K562 (cell line): ENCODE measurements at regions of chr3 and their contacts with region 1.

Region 1: DNA sequence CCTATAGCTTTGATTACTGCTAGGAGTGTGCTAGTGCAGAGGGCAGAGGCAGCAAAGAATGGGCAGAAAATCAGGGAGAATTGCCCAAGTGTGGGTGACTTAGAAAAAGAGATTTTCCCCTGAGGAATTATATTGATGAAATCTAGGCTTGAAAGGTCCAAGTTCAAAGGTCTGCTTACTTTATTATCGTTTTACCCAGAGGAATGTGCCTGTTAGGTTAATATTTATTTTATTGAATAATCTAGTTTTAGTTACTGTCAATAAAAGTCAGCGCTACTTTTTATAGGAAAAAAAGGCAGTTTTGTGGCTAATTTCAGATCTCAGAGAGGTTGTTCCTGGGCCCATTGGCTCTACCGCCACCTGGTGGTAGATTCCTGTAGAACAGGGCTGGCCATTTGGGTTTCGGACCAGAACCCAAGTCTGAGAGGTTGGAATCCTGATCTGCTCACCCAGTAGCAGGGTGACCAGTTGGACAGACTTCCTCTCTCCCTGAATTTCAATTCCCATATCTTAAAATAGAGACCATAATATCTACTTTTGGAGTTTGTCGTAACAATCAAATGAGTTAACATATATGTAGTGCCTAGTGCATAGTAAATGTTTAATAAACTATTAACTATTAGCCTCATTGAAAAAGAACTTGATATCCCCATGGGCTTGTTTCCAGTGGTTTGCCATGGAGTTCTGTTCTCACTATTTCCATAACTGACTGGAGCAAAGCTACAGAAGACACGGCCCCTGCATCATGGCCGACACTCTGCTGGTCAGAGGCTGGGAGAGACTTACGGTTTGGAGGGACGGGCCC is 62.7 kb upstream of the ZNF148 start:
- DNase-seq: peak; percentile 42 to 71 (median 53)
- ATAC-seq: 0 out of 3 replicates have a peak, but pooled peaks have one; percentile 11
- H3K4me3 ChIP-seq: no peak overlapping the region
- H3K27ac ChIP-seq: no peak overlapping the region
- H3K4me1 ChIP-seq: peaks cover 37 to 42% of the 10 kb centered on the region in 2 experiments; a peak in 4 of 5 replicates
- H3K27me3 ChIP-seq: no peaks in the 10 kb centered on the region
- CTCF ChIP-seq: peak; percentile 73 to 86 (median 73)
- EP300 ChIP-seq: no peak
- POLR2A ChIP-seq: no peak
- RAD21 ChIP-seq: peak; percentile 63 to 78

Region 2: GRCh38 chr3:124995460-124995994 is 442.3 kb before region 1 on chr3:
- CTCF ChIA-PET with region 1: no interaction called
- POLR2A ChIA-PET with region 1: no interaction called
- in situ Hi-C with region 1: no loop called
- intact Hi-C with region 1: loop called (anchors 10 kb)
- DNase-seq: peak; percentile 8 to 47 (median 28)
- ATAC-seq: peak; percentile 86
- H3K4me3 ChIP-seq: no peak overlapping the region
- H3K27ac ChIP-seq: no peak overlapping the region
- H3K4me1 ChIP-seq: no peaks in the 10 kb centered on the region; a peak in 1 of 5 replicates
- H3K27me3 ChIP-seq: peaks cover 18 to 51% of the 10 kb centered on the region in 2 experiments; a peak in 4 of 5 replicates
- CTCF ChIP-seq: peak; percentile 47 to 73 (median 57)
- EP300 ChIP-seq: no peak
- POLR2A ChIP-seq: no peak
- RAD21 ChIP-seq: peak; percentile 75 to 82

Region 3: GRCh38 chr3:125381743-125382142 is 56.1 kb before region 1 on chr3:
- CTCF ChIA-PET with region 1: no interaction called
- POLR2A ChIA-PET with region 1: interaction called, 4 read pairs
- in situ Hi-C with region 1: no loop called
- intact Hi-C with region 1: loop called (anchors 10 kb)
- DNase-seq: no peak
- ATAC-seq: no peak; the same call in 2 of the 3 replicates
- H3K4me3 ChIP-seq: no peak overlapping the region
- H3K27ac ChIP-seq: no peak overlapping the region
- H3K4me1 ChIP-seq: peaks cover 2 to 3% of the 10 kb centered on the region in 2 experiments; a peak in 2 of 5 replicates
- H3K27me3 ChIP-seq: no peaks in the 10 kb centered on the region
- CTCF ChIP-seq: no peak
- EP300 ChIP-seq: no peak
- POLR2A ChIP-seq: no peak
- RAD21 ChIP-seq: no peak

Region 4: GRCh38 chr3:125496701-125497100 is 58.9 kb after region 1 on chr3:
- CTCF ChIA-PET with region 1: no interaction called
- POLR2A ChIA-PET with region 1: no interaction called
- in situ Hi-C with region 1: no loop called
- intact Hi-C with region 1: no loop called
- DNase-seq: peak; percentile 12 to 68 (median 34)
- ATAC-seq: peak; percentile 86
- H3K4me3 ChIP-seq: no peak overlapping the region
- H3K27ac ChIP-seq: peak overlapping the region; percentile 74; the same call in 2 of the 3 replicates
- H3K4me1 ChIP-seq: peaks cover 0 to 13% of the 10 kb centered on the region in 2 experiments; a peak in 2 of 5 replicates
- H3K27me3 ChIP-seq: no peaks in the 10 kb centered on the region
- CTCF ChIP-seq: no peak
- EP300 ChIP-seq: peak; percentile 46; the same call in 1 of the 2 replicates
- POLR2A ChIP-seq: no peak
- RAD21 ChIP-seq: no peak